ENCODE measurements at regions of chr12 and their contacts with region 1.

Region 1: GRCh38 chr12:30754709-30755394 is at the start of gene CAPRIN2:
- H3K4me3 Mint-ChIP-seq: peak within 1 kb of the TSS; percentile 91
- H3K27ac Mint-ChIP-seq: peak within 1 kb of the TSS; percentile 77
- H3K4me1 Mint-ChIP-seq: peaks cover 25% of the 10 kb centered on the region
- H3K27me3 Mint-ChIP-seq: peaks cover 7% of the 10 kb centered on the region

Region 2: GRCh38 chr12:28780096-28780495 is 1974.8 kb before region 1 on chr12:
- intact Hi-C with region 1: no loop called
- H3K4me3 Mint-ChIP-seq: no peak overlapping the region
- H3K27ac Mint-ChIP-seq: no peak overlapping the region
- H3K4me1 Mint-ChIP-seq: no peaks in the 10 kb centered on the region
- H3K27me3 Mint-ChIP-seq: no peaks in the 10 kb centered on the region

Region 3: DNA sequence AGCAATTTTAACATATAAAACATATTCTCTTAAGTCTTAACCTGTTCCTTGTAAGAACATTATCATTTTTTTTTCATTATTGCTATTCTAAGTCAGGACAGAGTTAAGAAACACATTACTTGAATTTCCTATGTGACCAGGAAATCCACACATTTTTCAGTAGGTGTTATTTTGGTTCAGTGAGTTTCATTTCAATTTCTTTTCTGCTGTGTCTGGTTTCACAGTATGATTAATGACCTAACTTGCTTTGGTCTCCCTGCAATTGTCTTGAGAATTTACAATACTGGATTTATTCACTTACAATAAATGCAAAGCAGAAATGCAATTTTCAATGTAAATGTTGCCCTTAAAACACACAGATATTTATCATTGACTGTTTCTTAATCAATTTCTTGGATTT is 574.2 kb before region 1 on chr12:
- intact Hi-C with region 1: no loop called
- H3K4me3 Mint-ChIP-seq: no peak overlapping the region
- H3K27ac Mint-ChIP-seq: no peak overlapping the region
- H3K4me1 Mint-ChIP-seq: no peaks in the 10 kb centered on the region
- H3K27me3 Mint-ChIP-seq: peaks cover 2% of the 10 kb centered on the region

Region 4: DNA sequence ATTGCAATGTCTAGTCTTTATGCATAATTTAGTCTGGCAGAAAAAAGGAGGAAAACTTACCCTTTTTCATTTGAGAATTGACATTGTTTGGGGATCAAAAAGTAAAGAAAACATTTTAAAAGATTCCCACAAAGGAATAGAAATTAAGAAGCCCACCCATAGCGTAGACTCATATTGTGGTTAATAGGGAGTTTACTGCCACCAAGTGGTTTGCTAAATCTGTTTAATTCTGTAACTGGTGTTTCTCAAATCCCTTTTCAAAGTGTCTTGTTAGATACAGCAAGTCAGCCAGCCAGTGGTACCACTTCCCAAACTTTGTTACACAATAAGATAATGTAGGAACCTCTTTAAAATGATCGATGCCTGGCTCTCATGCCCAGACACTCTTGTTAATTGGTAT is 239.5 kb before region 1 on chr12:
- intact Hi-C with region 1: no loop called
- H3K4me3 Mint-ChIP-seq: no peak overlapping the region
- H3K27ac Mint-ChIP-seq: no peak overlapping the region
- H3K4me1 Mint-ChIP-seq: no peaks in the 10 kb centered on the region
- H3K27me3 Mint-ChIP-seq: no peaks in the 10 kb centered on the region

Region 5: GRCh38 chr12:30679241-30679640 is 75.6 kb before region 1 on chr12:
- intact Hi-C with region 1: loop called (anchors 5 kb)
- H3K4me3 Mint-ChIP-seq: no peak overlapping the region
- H3K27ac Mint-ChIP-seq: peak overlapping the region; percentile 59
- H3K4me1 Mint-ChIP-seq: peaks cover 33% of the 10 kb centered on the region
- H3K27me3 Mint-ChIP-seq: no peaks in the 10 kb centered on the region

Region 6: GRCh38 chr12:30695199-30696103 is 59.4 kb before region 1 on chr12 and contains the start of gene IPO8:
- intact Hi-C with region 1: loop called (anchors 1 kb)
- H3K4me3 Mint-ChIP-seq: peak within 1 kb of the TSS; percentile 91
- H3K27ac Mint-ChIP-seq: peak within 1 kb of the TSS; percentile 90
- H3K4me1 Mint-ChIP-seq: peaks cover 29% of the 10 kb centered on the region
- H3K27me3 Mint-ChIP-seq: peaks cover 4% of the 10 kb centered on the region

Region 7: DNA sequence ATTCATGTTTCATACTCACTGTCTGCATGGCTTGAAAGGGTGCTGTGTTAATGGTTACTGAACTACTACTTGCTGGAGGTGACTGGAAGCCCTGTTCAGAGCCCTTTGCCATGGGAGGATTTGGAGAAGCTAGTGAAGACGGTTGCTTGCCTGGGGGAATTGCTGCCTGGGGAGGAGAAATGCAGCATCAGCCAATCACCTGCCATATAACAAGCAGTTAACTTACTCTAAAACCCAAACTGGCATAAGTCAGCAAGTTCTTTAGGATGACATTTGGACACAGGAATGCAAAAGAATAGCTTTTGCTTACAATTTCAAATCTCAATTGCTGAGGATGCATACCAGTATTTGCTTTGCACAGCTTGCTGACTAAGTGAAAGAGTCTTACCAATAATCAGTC is 35.8 kb before region 1 on chr12:
- intact Hi-C with region 1: no loop called
- H3K4me3 Mint-ChIP-seq: no peak overlapping the region
- H3K27ac Mint-ChIP-seq: no peak overlapping the region
- H3K4me1 Mint-ChIP-seq: no peaks in the 10 kb centered on the region
- H3K27me3 Mint-ChIP-seq: no peaks in the 10 kb centered on the region

Region 8: GRCh38 chr12:32679091-32679919 is 1924.5 kb after region 1 on chr12 and contains the start of gene DNM1L:
- intact Hi-C with region 1: loop called (anchors 10 kb)
- H3K4me3 Mint-ChIP-seq: peak within 1 kb of the TSS; percentile 87
- H3K27ac Mint-ChIP-seq: peak within 1 kb of the TSS; percentile 93
- H3K4me1 Mint-ChIP-seq: peaks cover 35% of the 10 kb centered on the region
- H3K27me3 Mint-ChIP-seq: no peaks in the 10 kb centered on the region